ENCODE measurements at regions of chr5 and their contacts with region 1.

Region 1: GRCh38 chr5:132526290-132526973 is 16.9 kb downstream of the IL5 start:
- DNase-seq: peak; percentile 57
- ATAC-seq: peak; percentile 57
- H3K4me3 Mint-ChIP-seq: no peak overlapping the region
- H3K27ac Mint-ChIP-seq: peak overlapping the region; percentile 51
- H3K4me1 Mint-ChIP-seq: peaks cover 42% of the 10 kb centered on the region
- H3K27me3 Mint-ChIP-seq: peaks cover 2% of the 10 kb centered on the region
- CTCF ChIP-seq: peak; percentile 98

Region 2: GRCh38 chr5:132500931-132501630 is 25.4 kb before region 1 on chr5:
- CTCF ChIA-PET with region 1: interaction called, 18 read pairs
- POLR2A ChIA-PET with region 1: interaction called, 3 read pairs
- intact Hi-C with region 1: no loop called
- DNase-seq: peak; percentile 83
- ATAC-seq: peak; percentile 40
- H3K4me3 Mint-ChIP-seq: no peak overlapping the region
- H3K27ac Mint-ChIP-seq: peak overlapping the region; percentile 71
- H3K4me1 Mint-ChIP-seq: peaks cover 36% of the 10 kb centered on the region
- H3K27me3 Mint-ChIP-seq: peaks cover under 1% of the 10 kb centered on the region
- CTCF ChIP-seq: peak; percentile 89

Region 3: DNA sequence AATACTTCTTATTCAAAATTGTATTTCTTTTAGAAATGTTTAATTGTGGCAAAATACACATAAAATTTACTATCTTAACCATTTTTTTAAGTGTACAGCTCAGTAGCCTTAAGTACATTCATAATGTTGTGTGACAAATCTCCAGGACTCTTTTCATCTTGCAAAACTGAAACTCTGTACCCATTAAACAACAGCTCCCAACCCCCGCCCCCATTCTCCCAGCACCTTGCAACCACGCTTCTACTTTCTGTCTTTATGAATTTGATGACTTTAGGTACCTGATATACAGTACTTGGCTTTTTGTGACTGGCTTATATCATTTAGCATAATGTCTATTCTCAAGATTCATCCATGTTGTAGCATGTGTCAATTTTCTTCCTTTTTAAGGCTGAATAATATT is 19.7 kb after region 1 on chr5:
- CTCF ChIA-PET with region 1: interaction called, 31 read pairs
- POLR2A ChIA-PET with region 1: interaction called, 3 read pairs
- intact Hi-C with region 1: no loop called
- DNase-seq: peak; percentile 86
- ATAC-seq: peak; percentile 85
- H3K4me3 Mint-ChIP-seq: no peak overlapping the region
- H3K27ac Mint-ChIP-seq: no peak overlapping the region
- H3K4me1 Mint-ChIP-seq: peaks cover 28% of the 10 kb centered on the region
- H3K27me3 Mint-ChIP-seq: peaks cover 2% of the 10 kb centered on the region
- CTCF ChIP-seq: no peak

Region 4: DNA sequence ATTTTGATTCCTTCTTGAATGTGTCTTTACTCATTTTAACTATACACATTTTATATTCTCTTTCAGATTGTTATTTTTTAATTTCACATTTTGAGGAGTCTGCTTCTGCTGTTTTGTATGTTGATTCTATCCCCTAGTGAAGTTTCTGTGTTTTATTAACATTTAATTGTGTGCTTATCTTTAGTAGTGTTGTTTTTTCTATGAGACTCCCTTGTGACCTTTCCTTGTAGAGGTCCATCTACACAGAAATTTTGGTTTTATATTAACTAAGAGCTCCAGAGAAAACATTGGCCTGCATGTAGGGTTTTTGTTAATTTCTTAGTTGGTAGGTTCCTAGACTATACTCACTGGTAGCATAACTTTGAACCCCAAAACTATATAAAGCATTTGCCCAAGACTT is 96.2 kb after region 1 on chr5:
- CTCF ChIA-PET with region 1: no interaction called
- POLR2A ChIA-PET with region 1: no interaction called
- intact Hi-C with region 1: loop called (anchors 5 kb)
- DNase-seq: no peak
- ATAC-seq: no peak
- H3K4me3 Mint-ChIP-seq: no peak overlapping the region
- H3K27ac Mint-ChIP-seq: no peak overlapping the region
- H3K4me1 Mint-ChIP-seq: peaks cover 13% of the 10 kb centered on the region
- H3K27me3 Mint-ChIP-seq: no peaks in the 10 kb centered on the region
- CTCF ChIP-seq: no peak

Region 5: GRCh38 chr5:132714456-132715307 is 188.2 kb after region 1 on chr5:
- CTCF ChIA-PET with region 1: interaction called, 9 read pairs
- POLR2A ChIA-PET with region 1: no interaction called
- intact Hi-C with region 1: loop called (anchors 10 kb)
- DNase-seq: no peak
- ATAC-seq: peak; percentile 53
- H3K4me3 Mint-ChIP-seq: no peak overlapping the region
- H3K27ac Mint-ChIP-seq: no peak overlapping the region
- H3K4me1 Mint-ChIP-seq: peaks cover 15% of the 10 kb centered on the region
- H3K27me3 Mint-ChIP-seq: no peaks in the 10 kb centered on the region
- CTCF ChIP-seq: peak; percentile 61

Region 6: GRCh38 chr5:132829742-132830435 is 303.5 kb after region 1 on chr5:
- CTCF ChIA-PET with region 1: interaction called, 15 read pairs
- POLR2A ChIA-PET with region 1: no interaction called
- intact Hi-C with region 1: no loop called
- DNase-seq: peak; percentile 79
- ATAC-seq: peak; percentile 83
- H3K4me3 Mint-ChIP-seq: peak overlapping the region; percentile 69
- H3K27ac Mint-ChIP-seq: no peak overlapping the region
- H3K4me1 Mint-ChIP-seq: peaks cover 7% of the 10 kb centered on the region
- H3K27me3 Mint-ChIP-seq: peaks cover 46% of the 10 kb centered on the region
- CTCF ChIP-seq: peak; percentile 92

Measured in activated CD8-positive, alpha-beta T cell treated with anti-CD3 and anti-CD28 coated beads for 36 hours (primary cell).